ENCODE measurements at regions of chr20 and their contacts with region 1.

Region 1: DNA sequence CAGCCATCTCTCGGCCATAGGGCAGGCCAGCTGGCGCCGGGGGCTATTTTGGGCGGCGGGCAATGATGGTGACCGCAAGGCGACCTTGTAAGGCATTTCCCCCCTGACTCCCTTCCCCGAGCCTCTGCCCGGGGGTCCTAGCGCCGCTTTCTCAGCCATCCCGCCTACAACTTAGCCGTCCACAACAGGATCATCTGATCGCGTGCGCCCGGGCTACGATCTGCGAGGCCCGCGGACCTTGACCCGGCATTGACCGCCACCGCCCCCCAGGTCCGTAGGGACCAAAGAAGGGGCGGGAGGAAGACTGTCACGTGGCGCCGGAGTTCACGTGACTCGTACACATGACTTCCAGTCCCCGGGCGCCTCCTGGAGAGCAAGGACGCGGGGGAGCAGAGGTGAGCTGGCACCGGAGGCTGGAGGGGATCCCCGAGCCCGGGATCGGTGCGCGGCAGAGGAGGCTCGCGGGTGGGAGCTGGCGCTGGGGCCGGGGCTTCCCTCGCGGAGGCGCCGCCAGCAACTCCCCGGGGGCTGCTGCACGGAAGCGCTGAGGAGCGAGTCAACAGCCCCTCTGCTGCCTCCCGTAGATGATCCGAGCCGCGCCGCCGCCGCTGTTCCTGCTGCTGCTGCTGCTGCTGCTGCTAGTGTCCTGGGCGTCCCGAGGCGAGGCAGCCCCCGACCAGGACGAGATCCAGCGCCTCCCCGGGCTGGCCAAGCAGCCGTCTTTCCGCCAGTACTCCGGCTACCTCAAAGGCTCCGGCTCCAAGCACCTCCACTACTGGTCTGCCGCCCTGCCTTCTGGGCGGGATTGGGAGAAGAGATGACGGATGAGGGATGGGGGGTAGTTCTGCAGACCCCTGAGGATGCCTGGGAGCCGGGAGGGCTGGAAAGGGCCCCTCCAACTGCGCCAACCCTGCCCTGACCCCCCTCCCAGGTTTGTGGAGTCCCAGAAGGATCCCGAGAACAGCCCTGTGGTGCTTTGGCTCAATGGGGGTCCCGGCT is at the starts of genes CTSA and NEURL2:
- DNase-seq: peak; percentile 89
- H3K4me3 Mint-ChIP-seq: peak within 1 kb of the TSS; percentile 95
- H3K27ac Mint-ChIP-seq: peak within 1 kb of the TSS; percentile 86
- H3K4me1 Mint-ChIP-seq: peaks cover 6% of the 10 kb centered on the region
- H3K27me3 Mint-ChIP-seq: no peaks in the 10 kb centered on the region
- CTCF ChIP-seq: no peak
- total RNA-seq, gene CTSA: 25.3 and 39.1 TPM in 2 replicates
- total RNA-seq, gene NEURL2: 2.0 and 2.5 TPM in 2 replicates

Region 2: DNA sequence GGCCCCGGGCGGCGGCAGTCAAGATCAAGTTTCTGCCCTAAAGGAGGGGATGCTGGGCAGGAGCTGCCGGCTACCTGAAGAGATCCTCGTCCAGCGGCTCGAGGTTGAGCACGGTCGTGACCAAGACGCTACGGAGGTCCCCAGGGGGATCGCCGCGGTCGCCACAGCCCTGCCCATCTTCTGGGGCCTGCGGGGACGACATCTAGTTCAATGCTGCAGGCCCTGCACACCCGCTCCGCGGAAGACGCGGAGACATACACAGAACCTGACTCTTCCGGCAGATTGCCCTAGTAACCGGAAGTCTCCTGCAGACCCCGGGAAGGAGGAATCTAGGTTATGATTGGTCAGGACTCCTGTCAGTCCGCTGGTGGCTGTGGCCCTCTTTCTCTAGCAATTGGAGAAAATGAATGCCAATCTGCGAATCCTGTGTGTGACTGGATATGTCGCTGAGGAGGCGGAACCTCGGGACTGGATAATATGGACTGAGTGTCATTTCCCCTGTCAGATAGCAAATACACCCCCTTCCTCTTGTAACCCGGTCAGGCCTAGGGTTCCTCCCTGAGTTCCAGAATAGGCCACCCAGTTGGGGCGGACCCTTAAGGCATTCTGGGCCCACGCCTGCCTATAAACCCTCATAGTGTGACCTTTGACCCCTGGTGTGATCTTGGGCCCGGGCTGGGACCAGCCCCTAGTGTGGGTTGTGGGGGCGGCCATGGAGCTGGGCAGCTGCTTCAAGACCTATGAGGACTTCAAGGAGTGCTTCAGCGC is 34.0 kb before region 1 on chr20 and contains the starts of genes ACOT8 and ZSWIM3:
- CTCF ChIA-PET with region 1: interaction called, 3 read pairs
- POLR2A ChIA-PET with region 1: interaction called, 24 read pairs
- intact Hi-C with region 1: no loop called
- DNase-seq: peak; percentile 100
- H3K4me3 Mint-ChIP-seq: peak within 1 kb of the TSS; percentile 92
- H3K27ac Mint-ChIP-seq: peak within 1 kb of the TSS; percentile 92
- H3K4me1 Mint-ChIP-seq: peaks cover 16% of the 10 kb centered on the region
- H3K27me3 Mint-ChIP-seq: no peaks in the 10 kb centered on the region
- CTCF ChIP-seq: no peak
- total RNA-seq, gene ACOT8: 19.5 and 20.1 TPM in 2 replicates
- total RNA-seq, gene ZSWIM3: 1.4 and 2.4 TPM in 2 replicates

Region 3: GRCh38 chr20:45905505-45906079 is 14.3 kb after region 1 on chr20:
- CTCF ChIA-PET with region 1: interaction called, 5 read pairs
- POLR2A ChIA-PET with region 1: interaction called, 49 read pairs
- intact Hi-C with region 1: no loop called
- DNase-seq: peak; percentile 91
- H3K4me3 Mint-ChIP-seq: peak overlapping the region; percentile 2
- H3K27ac Mint-ChIP-seq: peak overlapping the region; percentile 55
- H3K4me1 Mint-ChIP-seq: peaks cover 9% of the 10 kb centered on the region
- H3K27me3 Mint-ChIP-seq: no peaks in the 10 kb centered on the region
- CTCF ChIP-seq: no peak

Region 4: DNA sequence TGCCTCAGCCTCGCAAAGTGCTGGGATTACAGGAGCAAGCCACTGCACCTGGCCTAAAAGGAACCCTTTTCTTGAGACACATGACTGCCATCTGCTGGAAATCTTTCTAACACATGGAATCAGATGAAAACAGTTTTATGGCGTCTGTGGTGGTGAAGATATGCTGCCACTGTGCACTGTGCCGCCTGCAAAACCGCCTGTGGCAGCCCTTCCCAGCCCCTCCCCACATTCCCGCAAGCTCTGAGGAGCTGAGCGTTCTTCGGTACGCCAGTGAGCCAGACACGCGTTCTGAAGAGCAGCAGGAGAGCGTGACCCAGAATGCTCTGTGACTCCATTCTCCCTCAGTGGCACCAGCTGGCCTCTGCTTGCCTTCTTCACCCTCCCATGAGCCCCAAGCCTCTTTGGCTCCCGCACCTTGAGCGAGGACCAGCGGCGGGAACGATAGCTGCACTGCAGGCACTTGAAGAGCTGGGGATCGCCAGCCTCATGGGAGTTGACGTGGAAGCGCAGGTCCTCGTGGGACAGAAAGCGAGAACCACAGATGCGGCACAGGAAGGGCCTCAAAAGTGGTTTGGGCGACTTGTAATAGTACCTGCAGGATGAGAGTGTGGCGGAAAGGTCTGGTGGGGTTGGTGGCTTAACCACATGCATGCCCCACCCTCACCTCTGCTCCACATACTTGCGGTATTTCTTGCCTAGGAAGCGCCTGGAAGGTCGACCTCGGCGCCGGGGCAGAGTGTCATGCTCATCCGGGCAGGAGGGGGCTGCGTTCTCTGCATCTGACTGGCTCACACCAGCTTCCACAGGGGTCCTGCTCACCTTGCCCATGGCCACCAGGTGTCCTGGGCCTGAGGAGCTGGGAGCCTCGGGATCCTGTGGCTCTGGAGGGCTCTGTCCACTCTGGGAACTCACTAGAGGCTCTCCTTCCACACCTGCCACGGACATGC is 72.0 kb after region 1 on chr20:
- CTCF ChIA-PET with region 1: interaction called, 10 read pairs
- POLR2A ChIA-PET with region 1: interaction called, 3 read pairs
- intact Hi-C with region 1: loop called (anchors 1 kb)
- DNase-seq: peak; percentile 63
- H3K4me3 Mint-ChIP-seq: no peak overlapping the region
- H3K27ac Mint-ChIP-seq: no peak overlapping the region
- H3K4me1 Mint-ChIP-seq: no peaks in the 10 kb centered on the region
- H3K27me3 Mint-ChIP-seq: no peaks in the 10 kb centered on the region
- CTCF ChIP-seq: peak; percentile 44

Region 5: GRCh38 chr20:46070215-46070900 is 179.1 kb after region 1 on chr20:
- CTCF ChIA-PET with region 1: no interaction called
- POLR2A ChIA-PET with region 1: no interaction called
- intact Hi-C with region 1: no loop called
- DNase-seq: no peak
- H3K4me3 Mint-ChIP-seq: no peak overlapping the region
- H3K27ac Mint-ChIP-seq: no peak overlapping the region
- H3K4me1 Mint-ChIP-seq: peaks cover 8% of the 10 kb centered on the region
- H3K27me3 Mint-ChIP-seq: no peaks in the 10 kb centered on the region
- CTCF ChIP-seq: no peak

Measured in MCF 10A (cell line).